ENCODE measurements at regions of chr4 and their contacts with region 1.

Region 1: DNA sequence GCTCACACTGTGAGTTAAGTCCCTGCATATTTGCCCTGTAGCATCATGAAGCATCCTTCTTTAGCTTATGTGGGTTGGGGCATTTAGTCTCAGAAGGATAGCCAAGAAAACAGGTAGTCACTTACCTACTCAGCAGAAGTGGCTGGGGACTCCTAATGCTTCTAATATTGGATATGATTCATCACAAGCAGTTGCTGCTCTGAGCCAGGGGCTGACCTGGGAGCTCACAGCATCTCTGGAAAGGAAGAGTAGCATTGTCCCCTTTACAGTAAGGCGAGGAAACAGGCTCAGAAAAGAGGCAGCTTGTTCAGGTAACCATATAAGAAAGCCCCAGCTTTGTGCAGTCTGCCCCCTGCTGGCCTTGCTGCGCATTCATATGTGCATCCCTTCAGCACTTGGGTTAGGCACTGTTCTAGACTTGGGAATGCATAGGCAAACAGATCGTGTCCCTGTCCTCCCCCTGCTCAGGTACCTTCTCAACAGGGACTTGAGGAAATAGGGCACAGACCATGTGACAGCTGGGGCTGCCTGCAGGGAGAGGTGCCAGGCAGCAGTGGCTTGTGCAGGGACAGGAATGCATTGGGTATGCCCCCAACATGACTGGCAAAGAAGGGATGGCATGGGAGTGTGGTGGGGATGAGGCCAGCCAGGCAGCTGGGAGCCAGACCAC is 35.7 kb upstream of the TBC1D14 start:
- DNase-seq: peak; percentile 75
- ATAC-seq: peak; percentile 76 to 77

Region 2: GRCh38 chr4:6720202-6720699 is 153.7 kb before region 1 on chr4:
- intact Hi-C with region 1: loop called (anchors 2 to 5 kb)
- DNase-seq: peak; percentile 89
- ATAC-seq: peak; percentile 56 to 67

Region 3: DNA sequence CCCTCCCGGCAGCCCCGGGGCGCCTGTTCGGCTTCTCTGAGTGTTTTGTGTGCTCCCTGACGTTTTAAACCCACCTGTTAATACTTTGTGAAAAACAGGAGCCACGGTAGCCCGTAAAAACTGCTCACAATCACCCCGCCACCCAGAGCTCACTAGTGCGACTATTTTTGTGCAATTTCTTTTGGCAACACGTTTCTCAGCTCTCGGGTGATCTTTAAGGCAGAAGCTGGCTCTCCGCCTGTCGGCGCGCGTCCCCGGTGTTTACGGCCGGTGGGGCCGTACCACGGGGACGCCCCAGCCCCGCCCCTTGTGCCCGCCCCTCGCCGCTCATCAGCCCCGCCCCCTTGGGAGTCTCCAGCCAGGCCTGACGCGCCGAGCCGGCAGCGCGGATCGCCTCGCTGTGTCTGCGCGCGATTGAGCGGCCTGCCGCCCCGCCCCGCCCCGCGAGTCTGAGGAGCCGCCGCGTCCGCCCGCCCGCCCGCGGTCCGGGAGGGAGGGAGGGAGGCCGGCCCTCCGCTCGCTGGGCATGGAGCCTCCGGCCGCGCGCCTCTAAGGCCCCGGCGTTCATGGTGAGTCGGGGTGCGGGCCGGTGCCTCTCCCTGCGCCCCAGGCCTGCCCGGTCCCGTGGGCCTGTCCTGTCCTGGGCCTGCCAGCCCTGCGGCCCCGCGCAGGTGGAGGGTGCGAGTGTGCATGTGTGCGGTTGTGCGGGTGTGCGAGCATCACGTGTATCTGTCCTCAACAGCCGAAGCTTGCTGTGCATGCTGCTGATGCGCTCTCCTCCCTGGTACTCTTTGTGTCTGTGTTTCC is 113.1 kb after region 1 on chr4:
- intact Hi-C with region 1: no loop called
- DNase-seq: peak; percentile 95
- ATAC-seq: peak; percentile 96